ENCODE measurements at regions of chr16 and their contacts with region 1.

Region 1: GRCh38 chr16:23863511-23864422 is 28.0 kb downstream of the PRKCB start:
- DNase-seq: peak; percentile 86
- H3K4me3 ChIP-seq: peak overlapping the region; percentile 65
- H3K27ac ChIP-seq: peak overlapping the region; percentile 98
- H3K4me1 ChIP-seq: peaks cover 86% of the 10 kb centered on the region
- CTCF ChIP-seq: no peak

Region 2: GRCh38 chr16:23510164-23510914 is 353.4 kb before region 1 on chr16 and contains the start of gene GGA2:
- CTCF ChIA-PET with region 1: no interaction called
- POLR2A ChIA-PET with region 1: no interaction called
- intact Hi-C with region 1: loop called (anchors 10 kb)
- DNase-seq: peak; percentile 91
- H3K4me3 ChIP-seq: peak within 1 kb of the TSS; percentile 99
- H3K27ac ChIP-seq: peak within 1 kb of the TSS; percentile 91
- H3K4me1 ChIP-seq: peaks cover 62% of the 10 kb centered on the region
- CTCF ChIP-seq: no peak
- total RNA-seq, gene GGA2: 213 and 256 TPM in 2 replicates

Region 3: GRCh38 chr16:23835390-23836077 is 28.2 kb before region 1 on chr16 and contains the start of gene PRKCB:
- CTCF ChIA-PET with region 1: interaction called, 3 read pairs
- POLR2A ChIA-PET with region 1: interaction called, 83 read pairs
- intact Hi-C with region 1: loop called (anchors 2 kb)
- DNase-seq: peak; percentile 92
- H3K4me3 ChIP-seq: peak within 1 kb of the TSS; percentile 85
- H3K27ac ChIP-seq: peak within 1 kb of the TSS; percentile 18
- H3K4me1 ChIP-seq: peaks cover 46% of the 10 kb centered on the region
- CTCF ChIP-seq: no peak
- total RNA-seq, gene PRKCB: 21.0 and 24.2 TPM in 2 replicates

Region 4: GRCh38 chr16:24130494-24131085 is 266.8 kb after region 1 on chr16:
- CTCF ChIA-PET with region 1: no interaction called
- POLR2A ChIA-PET with region 1: no interaction called
- intact Hi-C with region 1: no loop called
- DNase-seq: no peak
- H3K4me3 ChIP-seq: no peak overlapping the region
- H3K27ac ChIP-seq: no peak overlapping the region
- H3K4me1 ChIP-seq: no peaks in the 10 kb centered on the region
- CTCF ChIP-seq: no peak

Measured in OCI-LY7 (cell line).